IMR-90 (cell line): ENCODE measurements at regions of chr6 and their contacts with region 1.

Region 1: GRCh38 chr6:150813319-150813992 is 52.0 kb upstream of the MTHFD1L start:
- DNase-seq: peak; percentile 83
- ATAC-seq: no peak; the same call in 1 of the 2 replicates
- H3K4me3 ChIP-seq: no peak overlapping the region
- H3K27ac ChIP-seq: no peak overlapping the region
- H3K4me1 ChIP-seq: peaks cover 8% of the 10 kb centered on the region
- H3K27me3 ChIP-seq: no peaks in the 10 kb centered on the region
- CTCF ChIP-seq: no peak
- POLR2A ChIP-seq: no peak
- RAD21 ChIP-seq: no peak

Region 2: GRCh38 chr6:149934249-149935156 is 879.0 kb before region 1 on chr6:
- CTCF ChIA-PET with region 1: no interaction called
- POLR2A ChIA-PET with region 1: no interaction called
- dilution Hi-C with region 1: no loop called
- in situ Hi-C with region 1: loop called (anchors 10 kb)
- intact Hi-C with region 1: loop called (anchors 10 kb)
- DNase-seq: peak; percentile 77
- ATAC-seq: peak; percentile 77
- H3K4me3 ChIP-seq: no peak overlapping the region
- H3K27ac ChIP-seq: no peak overlapping the region
- H3K4me1 ChIP-seq: peaks cover 4% of the 10 kb centered on the region; the same call in 1 of the 2 replicates
- H3K27me3 ChIP-seq: peaks cover 51% of the 10 kb centered on the region
- CTCF ChIP-seq: peak; percentile 85
- POLR2A ChIP-seq: no peak
- RAD21 ChIP-seq: peak; percentile 77

Region 3: GRCh38 chr6:150079604-150080003 is 733.9 kb before region 1 on chr6:
- CTCF ChIA-PET with region 1: interaction called, 9 read pairs
- POLR2A ChIA-PET with region 1: no interaction called
- dilution Hi-C with region 1: no loop called
- in situ Hi-C with region 1: loop called (anchors 10 kb)
- intact Hi-C with region 1: loop called (anchors 2 kb)
- DNase-seq: no peak
- ATAC-seq: no peak
- H3K4me3 ChIP-seq: no peak overlapping the region
- H3K27ac ChIP-seq: no peak overlapping the region
- H3K4me1 ChIP-seq: no peaks in the 10 kb centered on the region
- H3K27me3 ChIP-seq: peaks cover 16% of the 10 kb centered on the region
- CTCF ChIP-seq: no peak
- POLR2A ChIP-seq: no peak
- RAD21 ChIP-seq: no peak

Region 4: GRCh38 chr6:150417899-150418826 is 395.3 kb before region 1 on chr6:
- CTCF ChIA-PET with region 1: interaction called, 14 read pairs
- POLR2A ChIA-PET with region 1: no interaction called
- dilution Hi-C with region 1: no loop called
- in situ Hi-C with region 1: loop called (anchors 5 kb)
- intact Hi-C with region 1: loop called (anchors 1 kb)
- DNase-seq: peak; percentile 84
- ATAC-seq: peak; percentile 88
- H3K4me3 ChIP-seq: no peak overlapping the region
- H3K27ac ChIP-seq: no peak overlapping the region
- H3K4me1 ChIP-seq: no peaks in the 10 kb centered on the region; the same call in 1 of the 2 replicates
- H3K27me3 ChIP-seq: peaks cover 6% of the 10 kb centered on the region
- CTCF ChIP-seq: peak; percentile 76
- POLR2A ChIP-seq: no peak
- RAD21 ChIP-seq: peak; percentile 65

Region 5: GRCh38 chr6:150741633-150742504 is 71.6 kb before region 1 on chr6:
- CTCF ChIA-PET with region 1: no interaction called
- POLR2A ChIA-PET with region 1: no interaction called
- dilution Hi-C with region 1: no loop called
- in situ Hi-C with region 1: no loop called
- intact Hi-C with region 1: no loop called
- DNase-seq: no peak
- ATAC-seq: no peak
- H3K4me3 ChIP-seq: no peak overlapping the region
- H3K27ac ChIP-seq: no peak overlapping the region
- H3K4me1 ChIP-seq: no peaks in the 10 kb centered on the region
- H3K27me3 ChIP-seq: peaks cover 2% of the 10 kb centered on the region; the same call in 1 of the 2 replicates
- CTCF ChIP-seq: no peak
- POLR2A ChIP-seq: no peak
- RAD21 ChIP-seq: no peak

Region 6: DNA sequence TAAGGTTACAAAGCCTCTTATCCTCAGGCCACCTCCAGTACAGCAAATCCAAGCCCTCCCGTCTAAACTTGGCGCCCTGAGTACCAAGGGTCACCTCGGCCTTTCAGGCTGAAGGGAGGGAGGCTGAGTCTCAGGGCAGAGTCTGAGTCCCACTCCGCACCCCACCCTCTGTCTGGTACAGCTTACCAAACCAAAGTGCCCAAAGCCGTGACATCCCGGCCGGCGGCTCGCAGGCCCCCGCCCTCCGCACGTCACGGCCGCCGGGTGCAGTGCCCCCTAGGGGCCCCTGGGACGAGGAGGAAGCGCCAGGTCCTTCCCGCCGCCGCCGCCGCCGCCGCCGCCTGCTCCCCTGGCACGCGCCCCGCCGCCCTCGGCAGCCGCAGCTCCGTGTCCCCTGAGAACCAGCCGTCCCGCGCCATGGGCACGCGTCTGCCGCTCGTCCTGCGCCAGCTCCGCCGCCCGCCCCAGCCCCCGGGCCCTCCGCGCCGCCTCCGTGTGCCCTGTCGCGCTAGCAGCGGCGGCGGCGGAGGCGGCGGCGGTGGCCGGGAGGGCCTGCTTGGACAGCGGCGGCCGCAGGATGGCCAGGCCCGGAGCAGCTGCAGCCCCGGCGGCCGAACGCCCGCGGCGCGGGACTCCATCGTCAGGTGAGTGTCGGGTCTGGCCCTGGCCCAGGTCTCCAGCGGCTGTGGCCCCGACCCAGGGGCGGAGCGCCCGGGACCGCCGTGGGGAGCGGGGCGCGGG is 52.1 kb after region 1 on chr6 and contains the start of gene MTHFD1L:
- CTCF ChIA-PET with region 1: interaction called, 10 read pairs
- POLR2A ChIA-PET with region 1: no interaction called
- dilution Hi-C with region 1: no loop called
- in situ Hi-C with region 1: no loop called
- intact Hi-C with region 1: loop called (anchors 2 kb)
- DNase-seq: peak; percentile 91
- ATAC-seq: peak; percentile 75
- H3K4me3 ChIP-seq: peak within 1 kb of the TSS; percentile 81
- H3K27ac ChIP-seq: peak within 1 kb of the TSS; percentile 99
- H3K4me1 ChIP-seq: peaks cover 9% of the 10 kb centered on the region
- H3K27me3 ChIP-seq: no peaks in the 10 kb centered on the region
- CTCF ChIP-seq: peak; percentile 67
- POLR2A ChIP-seq: peak; percentile 91
- RAD21 ChIP-seq: peak; percentile 18
- total RNA-seq, gene MTHFD1L: 53.2 and 53.9 TPM in 2 replicates

Region 7: DNA sequence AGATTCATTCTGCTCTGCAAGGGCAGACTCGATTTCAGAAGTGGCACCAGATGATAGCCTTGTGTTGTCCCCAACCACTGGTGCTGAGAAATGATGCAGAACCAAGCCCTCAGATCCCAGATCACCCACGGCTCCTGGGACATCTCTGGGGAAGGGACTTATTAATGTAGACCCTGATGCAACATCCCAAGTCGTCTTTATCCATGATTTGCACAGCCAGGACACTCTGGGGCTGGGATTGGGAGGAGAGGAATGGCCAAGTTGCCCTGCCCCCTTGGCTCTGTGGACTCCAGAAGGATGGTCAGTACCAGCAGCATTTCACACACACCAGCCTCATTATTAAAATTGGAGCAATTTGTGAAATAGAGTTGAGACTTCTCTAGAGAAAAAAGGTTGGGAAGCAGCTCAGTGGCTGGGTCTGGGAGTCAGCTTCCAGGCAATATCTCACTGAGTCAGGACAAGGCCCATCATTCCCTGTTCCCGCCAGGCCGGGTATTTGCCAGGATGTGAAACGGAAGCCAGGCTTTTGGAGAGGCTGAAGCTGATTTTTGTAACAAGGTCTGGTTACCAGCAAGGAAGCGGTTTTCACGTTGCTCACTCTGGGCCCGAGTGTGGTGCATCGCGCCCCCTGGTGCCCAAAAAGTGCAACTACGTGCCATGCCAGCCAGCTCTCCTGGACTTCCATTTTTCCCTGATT is 510.5 kb after region 1 on chr6:
- CTCF ChIA-PET with region 1: interaction called, 16 read pairs
- POLR2A ChIA-PET with region 1: no interaction called
- dilution Hi-C with region 1: no loop called
- in situ Hi-C with region 1: no loop called
- intact Hi-C with region 1: no loop called
- DNase-seq: peak; percentile 93
- ATAC-seq: peak; percentile 87
- H3K4me3 ChIP-seq: no peak overlapping the region
- H3K27ac ChIP-seq: peak overlapping the region; percentile 7; the same call in 1 of the 2 replicates
- H3K4me1 ChIP-seq: peaks cover 6% of the 10 kb centered on the region; the same call in 1 of the 2 replicates
- H3K27me3 ChIP-seq: no peaks in the 10 kb centered on the region
- CTCF ChIP-seq: peak; percentile 96
- POLR2A ChIP-seq: no peak
- RAD21 ChIP-seq: peak; percentile 96